ENCODE measurements at regions of chr19 and their contacts with region 1.

Region 1: GRCh38 chr19:38263689-38264485 is 486 bp upstream of the SPINT2 start:
- H3K4me3 Mint-ChIP-seq: peak overlapping the region; percentile 99
- H3K27ac Mint-ChIP-seq: peak overlapping the region; percentile 98
- H3K4me1 Mint-ChIP-seq: peaks cover 54% of the 10 kb centered on the region
- H3K27me3 Mint-ChIP-seq: no peaks in the 10 kb centered on the region

Region 2: DNA sequence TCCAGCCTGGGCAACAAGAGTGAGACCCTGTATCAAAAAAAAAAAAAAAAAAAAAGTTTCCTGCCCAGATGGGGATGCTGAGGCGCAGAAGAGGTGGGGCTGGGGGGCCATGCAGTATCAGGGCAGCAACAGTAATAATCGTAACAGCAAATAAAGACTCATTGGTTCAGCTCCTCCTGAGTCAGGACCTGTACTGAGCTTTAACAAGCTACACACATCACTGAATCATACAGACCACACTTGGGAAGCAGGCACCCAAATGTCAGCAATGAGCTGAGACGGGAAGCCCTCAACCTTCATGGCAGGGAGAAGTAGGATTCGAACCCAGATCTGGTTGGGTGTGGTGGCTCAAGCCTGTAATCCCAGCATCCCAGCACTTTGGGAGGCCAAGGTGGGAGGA is 29.3 kb before region 1 on chr19:
- intact Hi-C with region 1: no loop called
- H3K4me3 Mint-ChIP-seq: no peak overlapping the region
- H3K27ac Mint-ChIP-seq: no peak overlapping the region
- H3K4me1 Mint-ChIP-seq: peaks cover 8% of the 10 kb centered on the region
- H3K27me3 Mint-ChIP-seq: peaks cover 55% of the 10 kb centered on the region

Region 3: DNA sequence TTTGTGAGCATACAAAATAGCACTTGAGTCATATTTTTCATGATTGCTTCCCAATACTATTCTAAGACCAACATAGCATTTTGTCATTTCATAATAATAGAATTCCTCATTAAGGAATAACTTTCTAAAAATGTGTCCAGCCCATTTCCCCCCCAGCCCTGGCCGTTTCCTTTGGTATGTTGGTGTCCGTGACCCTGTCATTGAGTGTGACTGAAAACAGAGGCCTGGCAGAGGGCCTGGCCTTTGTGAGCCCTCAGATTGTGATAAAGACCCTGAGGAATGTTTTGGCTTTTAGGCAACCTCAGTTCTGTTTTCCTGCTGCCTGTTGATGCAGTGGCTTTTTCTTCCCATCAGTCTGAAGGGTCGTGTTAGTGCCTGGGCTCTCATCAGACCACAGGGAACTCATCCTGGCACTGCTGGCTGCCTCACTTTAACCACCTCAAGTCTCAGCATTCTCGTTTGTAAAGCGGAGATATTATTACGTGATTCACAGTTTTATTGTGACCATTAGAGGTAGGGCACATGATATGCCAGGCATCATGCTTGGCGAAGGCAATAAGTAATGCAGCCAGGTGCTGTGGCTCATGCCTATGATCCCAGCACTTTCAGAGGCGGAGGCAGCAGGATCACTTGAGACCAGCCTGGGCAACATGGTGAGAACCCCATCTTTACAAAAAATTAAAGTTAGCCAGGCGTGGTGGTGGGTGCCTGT is 14.2 kb after region 1 on chr19:
- intact Hi-C with region 1: no loop called
- H3K4me3 Mint-ChIP-seq: no peak overlapping the region
- H3K27ac Mint-ChIP-seq: no peak overlapping the region
- H3K4me1 Mint-ChIP-seq: peaks cover 85% of the 10 kb centered on the region
- H3K27me3 Mint-ChIP-seq: no peaks in the 10 kb centered on the region

Region 4: GRCh38 chr19:38315657-38316476 is 52.0 kb after region 1 on chr19 and contains the start of gene YIF1B:
- intact Hi-C with region 1: loop called (anchors 5 kb)
- H3K4me3 Mint-ChIP-seq: peak within 1 kb of the TSS; percentile 85
- H3K27ac Mint-ChIP-seq: peak within 1 kb of the TSS; percentile 90
- H3K4me1 Mint-ChIP-seq: peaks cover 76% of the 10 kb centered on the region
- H3K27me3 Mint-ChIP-seq: no peaks in the 10 kb centered on the region

Measured in dendritic cell treated with granulocyte-macrophage colony-stimulating factor and Interleukin-4, amounts not matched to agents 40 ng/mL and 50 ng/mL, for 4 days (primary cell).